Aorta (tissue), 5 donors: ENCODE measurements at regions of chr10 and their contacts with region 1.

Region 1: GRCh38 chr10:72364239-72364777 is 9.6 kb upstream of the DNAJB12 start:
- DNase-seq: peak; percentile 92 to 96
- ATAC-seq: peak; percentile 94
- H3K4me3 ChIP-seq: no peak overlapping the region
- H3K27ac ChIP-seq: peak overlapping the region in 1 of 2 donors; percentile 35
- H3K4me1 ChIP-seq: no peaks in the 10 kb centered on the region
- H3K27me3 ChIP-seq: no peaks in the 10 kb centered on the region

Region 2: DNA sequence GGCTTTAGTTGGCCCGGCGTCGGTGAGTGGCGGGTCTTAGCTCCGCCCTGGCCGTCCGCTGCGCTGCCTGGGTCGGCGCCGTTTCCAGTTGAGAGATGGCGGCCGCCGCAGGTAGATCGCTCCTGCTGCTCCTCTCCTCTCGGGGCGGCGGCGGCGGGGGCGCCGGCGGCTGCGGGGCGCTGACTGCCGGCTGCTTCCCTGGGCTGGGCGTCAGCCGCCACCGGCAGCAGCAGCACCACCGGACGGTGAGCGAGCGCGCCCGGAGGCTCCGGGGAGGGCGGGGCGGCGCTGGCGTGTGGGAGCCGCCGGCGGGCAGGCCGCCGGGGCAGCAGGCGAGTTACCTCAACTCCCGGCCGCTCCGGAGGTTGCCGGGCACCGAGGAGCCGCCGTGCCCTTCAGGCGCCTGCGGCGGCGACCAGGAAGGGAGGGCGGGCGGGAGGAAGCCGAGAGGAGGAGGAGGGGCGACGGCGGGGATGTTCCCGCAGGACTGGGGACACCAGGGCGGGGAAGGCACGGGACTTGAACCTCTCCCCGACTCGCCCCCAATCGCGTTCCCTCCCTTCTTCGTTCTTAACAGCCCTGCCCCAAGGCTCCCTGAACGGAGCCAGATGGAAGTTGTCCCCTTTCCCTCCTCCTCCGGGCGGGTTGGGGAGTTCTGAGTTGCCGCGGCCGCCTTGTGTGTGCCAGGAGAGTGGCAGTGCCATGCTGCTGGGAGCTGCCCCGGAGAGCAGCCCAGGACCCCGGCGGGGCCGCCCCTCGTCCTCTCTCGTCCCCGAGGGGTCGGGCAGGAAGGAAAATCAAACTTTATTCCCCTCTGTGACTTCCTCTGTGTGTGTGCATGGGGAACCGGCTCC is 328.0 kb after region 1 on chr10 and contains the start of gene MCU:
- intact Hi-C with region 1: loop called (anchors 2 to 10 kb)
- DNase-seq: peak; percentile 96 to 98
- ATAC-seq: peak; percentile 96
- H3K4me3 ChIP-seq: peak within 1 kb of the TSS; percentile 80 to 87
- H3K27ac ChIP-seq: peak within 1 kb of the TSS; percentile 92 to 98
- H3K4me1 ChIP-seq: peaks cover 5% of the 10 kb centered on the region in 2 donors
- H3K27me3 ChIP-seq: no peaks in the 10 kb centered on the region
- total RNA-seq, gene MCU: 31.5 to 45.6 TPM

Region 3: DNA sequence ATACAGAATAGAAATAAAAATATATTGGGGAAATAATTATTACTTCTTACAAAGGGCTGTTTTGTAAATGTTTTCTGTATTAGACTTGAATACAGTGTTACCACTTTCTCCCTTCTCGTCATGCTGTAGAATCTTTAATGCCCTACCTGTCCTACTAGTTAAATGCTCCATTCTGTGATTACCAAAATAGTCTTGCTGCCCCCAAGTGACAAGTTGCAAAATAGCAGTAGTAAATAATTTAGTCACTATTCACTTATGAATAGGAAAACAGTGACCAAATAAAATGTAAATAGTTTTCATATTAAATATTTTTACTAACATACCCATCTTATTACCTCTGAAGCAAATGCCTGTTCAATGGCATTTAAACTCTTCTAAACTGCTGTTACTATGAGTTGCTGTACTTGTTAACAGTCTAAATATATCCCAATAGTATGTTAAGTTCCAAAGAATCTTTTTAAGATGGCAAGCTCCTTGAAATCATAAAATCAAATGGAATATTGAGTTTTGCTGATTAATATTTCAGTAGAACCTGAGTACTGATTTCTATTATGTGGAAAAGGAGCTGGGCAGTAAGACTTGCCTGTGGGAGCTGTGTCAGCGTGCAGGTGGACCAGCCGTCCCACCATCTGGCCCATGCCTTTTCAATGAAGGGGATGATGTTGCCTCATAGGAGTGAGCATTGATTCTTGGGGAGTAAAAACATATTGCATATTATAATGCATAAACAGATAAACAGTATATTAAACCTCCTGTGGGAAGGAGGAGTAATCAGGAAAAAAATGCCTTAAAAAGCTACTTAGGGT is 511.1 kb after region 1 on chr10:
- intact Hi-C with region 1: loop called (anchors 5 to 10 kb)
- DNase-seq: no peak
- ATAC-seq: no peak
- H3K4me3 ChIP-seq: no peak overlapping the region
- H3K27ac ChIP-seq: no peak overlapping the region
- H3K4me1 ChIP-seq: no peaks in the 10 kb centered on the region
- H3K27me3 ChIP-seq: no peaks in the 10 kb centered on the region